ENCODE measurements at regions of chr2 and their contacts with region 1.

Region 1: DNA sequence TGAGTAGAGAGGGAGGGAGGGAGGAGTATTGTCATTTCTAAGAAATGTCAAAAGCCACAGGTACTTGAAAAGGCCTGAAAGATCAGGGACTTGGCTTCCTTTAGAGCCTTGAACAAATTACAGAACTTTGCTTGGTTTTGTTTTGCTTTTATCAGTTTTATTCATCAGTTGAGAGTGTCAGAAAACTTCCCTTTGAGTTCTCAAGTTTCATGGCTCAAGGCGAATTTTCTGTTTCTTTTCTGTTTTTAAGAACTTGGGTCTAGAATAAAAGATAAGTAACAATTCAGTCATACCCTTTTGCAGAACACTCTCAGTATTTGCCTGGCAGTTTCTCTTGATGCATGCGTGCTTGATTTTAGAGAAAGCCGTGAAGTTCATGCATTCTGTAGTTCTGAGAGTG is 531.9 kb downstream of the PARD3B start:
- DNase-seq: peak; percentile 2
- H3K4me3 Mint-ChIP-seq: peak overlapping the region; percentile 28
- H3K27ac Mint-ChIP-seq: peak overlapping the region; percentile 11
- H3K4me1 Mint-ChIP-seq: peaks cover 35% of the 10 kb centered on the region
- H3K27me3 Mint-ChIP-seq: no peaks in the 10 kb centered on the region

Region 2: GRCh38 chr2:204545023-204545860 is 531.9 kb before region 1 on chr2 and contains the start of gene PARD3B:
- intact Hi-C with region 1: no loop called
- DNase-seq: peak; percentile 8
- H3K4me3 Mint-ChIP-seq: peak within 1 kb of the TSS; percentile 86
- H3K27ac Mint-ChIP-seq: no peak within 1 kb of the TSS
- H3K4me1 Mint-ChIP-seq: peaks cover 9% of the 10 kb centered on the region
- H3K27me3 Mint-ChIP-seq: peaks cover 42% of the 10 kb centered on the region
- total RNA-seq, gene PARD3B: 0.10 and 0.26 TPM in 2 replicates

Region 3: DNA sequence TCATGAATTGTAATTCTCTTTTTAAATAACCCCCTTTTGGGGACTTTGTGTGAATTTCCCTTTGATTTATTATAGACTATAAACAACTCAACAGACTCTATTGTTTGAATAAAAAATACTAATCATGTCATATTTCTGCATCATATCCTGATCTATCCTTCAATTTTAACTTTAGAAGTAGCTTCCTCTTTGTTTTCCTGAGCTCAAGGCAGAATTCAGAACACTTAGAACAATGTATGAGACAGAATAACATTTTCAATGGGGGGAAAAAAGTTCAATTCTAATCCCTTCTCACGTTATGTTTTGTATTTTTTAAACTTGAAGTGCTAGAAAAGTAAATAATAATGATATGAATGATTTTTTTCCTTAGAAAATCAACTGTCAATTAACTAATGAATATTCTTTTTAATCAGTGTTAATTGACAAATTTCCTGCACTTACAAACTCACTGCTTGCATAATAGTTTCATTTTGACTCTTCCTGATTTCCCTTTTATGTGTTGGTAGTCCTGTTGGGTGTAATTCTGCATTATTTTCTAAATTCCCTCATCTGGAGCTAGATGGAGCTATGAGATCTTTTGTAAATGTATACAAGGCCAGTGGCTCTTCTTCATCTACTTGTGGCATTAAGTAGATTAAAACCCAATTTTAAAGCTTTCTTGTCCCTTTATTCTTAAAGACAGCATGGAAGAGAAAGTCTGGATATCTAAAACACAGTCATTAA is 205.8 kb before region 1 on chr2:
- intact Hi-C with region 1: loop called (anchors 10 kb)
- DNase-seq: no peak
- H3K4me3 Mint-ChIP-seq: no peak overlapping the region
- H3K27ac Mint-ChIP-seq: no peak overlapping the region
- H3K4me1 Mint-ChIP-seq: peaks cover 36% of the 10 kb centered on the region
- H3K27me3 Mint-ChIP-seq: peaks cover 17% of the 10 kb centered on the region

Region 4: DNA sequence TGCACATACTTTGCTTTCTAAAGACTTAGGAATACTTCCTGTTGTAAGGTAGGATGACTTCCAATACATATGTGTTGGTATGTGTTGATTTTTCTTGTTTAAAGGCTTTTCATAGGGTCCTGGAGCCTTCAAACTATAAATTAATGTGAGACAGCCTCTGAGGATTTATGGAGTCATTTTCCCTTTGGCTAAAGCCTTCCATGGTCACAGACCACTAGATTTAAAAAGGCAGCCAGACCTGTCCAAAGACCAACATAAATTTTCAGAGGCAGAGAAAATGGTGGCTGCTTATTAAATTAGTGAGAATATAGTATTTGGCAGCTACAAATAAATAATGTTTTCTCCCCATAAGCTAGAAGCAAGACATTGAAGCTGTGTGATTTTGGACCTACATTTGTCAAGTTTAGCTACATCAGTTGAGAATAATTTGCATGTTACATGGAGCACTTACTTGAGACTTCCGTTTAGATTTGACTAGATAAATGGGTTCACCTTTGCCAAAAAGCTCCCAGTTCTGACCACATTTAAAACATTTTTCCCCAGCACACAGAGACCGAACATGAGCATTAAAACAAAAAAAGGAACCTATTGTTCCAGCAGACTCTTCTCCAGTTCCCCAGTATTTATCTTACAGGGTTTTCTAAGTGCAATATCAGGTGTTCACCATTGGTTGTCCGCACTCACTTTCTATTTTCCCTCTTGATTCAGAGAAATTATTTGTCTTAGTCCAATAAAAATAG is 129.0 kb before region 1 on chr2:
- intact Hi-C with region 1: loop called (anchors 1 kb)
- DNase-seq: no peak
- H3K4me3 Mint-ChIP-seq: peak overlapping the region; percentile 50
- H3K27ac Mint-ChIP-seq: peak overlapping the region; percentile 73
- H3K4me1 Mint-ChIP-seq: peaks cover 69% of the 10 kb centered on the region
- H3K27me3 Mint-ChIP-seq: no peaks in the 10 kb centered on the region

Region 5: GRCh38 chr2:205024822-205025518 is 52.2 kb before region 1 on chr2:
- intact Hi-C with region 1: loop called (anchors 2 kb)
- DNase-seq: no peak
- H3K4me3 Mint-ChIP-seq: no peak overlapping the region
- H3K27ac Mint-ChIP-seq: peak overlapping the region; percentile 17
- H3K4me1 Mint-ChIP-seq: peaks cover 23% of the 10 kb centered on the region
- H3K27me3 Mint-ChIP-seq: peaks cover 2% of the 10 kb centered on the region

Region 6: GRCh38 chr2:205158404-205158803 is 81.2 kb after region 1 on chr2:
- intact Hi-C with region 1: no loop called
- DNase-seq: no peak
- H3K4me3 Mint-ChIP-seq: no peak overlapping the region
- H3K27ac Mint-ChIP-seq: no peak overlapping the region
- H3K4me1 Mint-ChIP-seq: peaks cover 7% of the 10 kb centered on the region
- H3K27me3 Mint-ChIP-seq: peaks cover 4% of the 10 kb centered on the region

Region 7: DNA sequence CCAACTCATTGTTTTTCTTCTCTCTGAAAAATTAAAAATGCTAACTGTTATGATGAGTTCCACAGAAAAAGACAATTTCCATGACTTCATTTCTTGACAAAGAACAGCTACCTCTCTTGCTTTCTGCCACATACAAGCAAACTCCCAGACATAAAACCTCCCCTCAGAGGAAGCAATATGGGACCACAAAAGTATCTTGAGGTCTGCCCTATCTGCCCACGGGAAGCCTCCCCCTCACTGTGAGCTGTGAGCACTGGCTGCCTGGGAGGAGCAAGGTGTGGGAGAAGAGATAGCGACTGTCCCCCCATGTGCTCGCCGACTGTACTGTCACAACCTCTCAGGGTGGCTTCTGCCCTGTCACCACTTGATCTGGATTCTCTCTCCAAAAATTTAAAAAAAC is 535.5 kb after region 1 on chr2:
- intact Hi-C with region 1: loop called (anchors 1 kb)
- DNase-seq: peak; percentile 21
- H3K4me3 Mint-ChIP-seq: peak overlapping the region; percentile 59
- H3K27ac Mint-ChIP-seq: peak overlapping the region; percentile 92
- H3K4me1 Mint-ChIP-seq: peaks cover 38% of the 10 kb centered on the region
- H3K27me3 Mint-ChIP-seq: peaks cover 12% of the 10 kb centered on the region